Ovary (tissue), 10 donors: ENCODE measurements at regions of chr13 and their contacts with region 1.

Region 1: GRCh38 chr13:27270594-27271520 is at the start of gene RASL11A:
- DNase-seq: peak; percentile 82 to 90 (median 88)
- H3K4me3 ChIP-seq: peak within 1 kb of the TSS; percentile 85
- H3K27ac ChIP-seq: peak within 1 kb of the TSS; percentile 69 to 83
- H3K4me1 ChIP-seq: peaks cover 14% of the 10 kb centered on the region
- H3K27me3 ChIP-seq: no peaks in the 10 kb centered on the region
- CTCF ChIP-seq: peak; percentile 91 to 98 (median 97)
- EP300 ChIP-seq: no peak
- POLR2A ChIP-seq: peak; percentile 74
- total RNA-seq, gene RASL11A: 6.2 to 36.3 (median 10.6) TPM

Region 2: GRCh38 chr13:26971990-26972887 is 298.6 kb before region 1 on chr13:
- intact Hi-C with region 1: loop called in 1 of 4 experiments (anchors 10 kb)
- DNase-seq: no peak
- H3K4me3 ChIP-seq: no peak overlapping the region
- H3K27ac ChIP-seq: no peak overlapping the region
- H3K4me1 ChIP-seq: peaks cover 3% of the 10 kb centered on the region
- H3K27me3 ChIP-seq: no peaks in the 10 kb centered on the region
- CTCF ChIP-seq: no peak
- EP300 ChIP-seq: no peak
- POLR2A ChIP-seq: no peak

Region 3: GRCh38 chr13:26985285-26985878 is 285.5 kb before region 1 on chr13:
- intact Hi-C with region 1: loop called in 2 of 4 experiments (anchors 5 kb)
- DNase-seq: peak; percentile 41 to 82 (median 55)
- H3K4me3 ChIP-seq: no peak overlapping the region
- H3K27ac ChIP-seq: no peak overlapping the region
- H3K4me1 ChIP-seq: peaks cover 9% of the 10 kb centered on the region
- H3K27me3 ChIP-seq: no peaks in the 10 kb centered on the region
- CTCF ChIP-seq: peak; percentile 57 to 85 (median 71)
- EP300 ChIP-seq: no peak
- POLR2A ChIP-seq: no peak

Region 4: DNA sequence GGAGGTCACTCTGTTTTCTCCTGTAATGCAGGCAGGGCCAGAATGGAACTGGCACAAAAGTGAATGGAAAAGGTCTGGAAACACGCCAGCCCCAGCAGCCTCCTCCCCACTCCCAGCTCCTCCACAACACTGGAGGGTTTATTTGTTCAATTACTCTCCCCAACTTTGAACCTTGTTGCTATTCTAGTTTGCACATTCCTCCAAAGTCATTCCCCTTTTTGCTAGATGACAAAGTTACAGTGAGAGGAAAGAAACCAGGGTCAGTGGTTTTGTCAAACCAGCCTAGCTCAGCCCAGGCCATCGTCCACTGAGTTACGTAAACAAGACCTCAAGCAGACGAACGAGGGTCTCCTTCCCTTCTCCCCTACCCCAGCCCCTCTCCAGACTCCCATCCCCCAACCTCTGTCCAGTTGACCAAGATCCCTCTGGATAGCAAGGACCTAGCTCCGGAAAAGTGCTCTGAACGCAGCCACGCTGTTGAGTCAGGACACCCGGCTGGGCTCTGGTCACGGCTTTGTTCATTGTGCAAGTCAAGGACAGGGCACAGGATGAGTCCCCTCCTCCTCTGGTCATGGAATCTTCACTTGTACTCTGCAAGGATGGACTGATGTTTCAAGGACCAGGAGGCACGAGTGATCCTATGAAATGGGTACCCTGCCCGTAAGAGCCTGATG is 279.2 kb before region 1 on chr13:
- intact Hi-C with region 1: loop called in 1 of 4 experiments (anchors 5 kb)
- DNase-seq: no peak
- H3K4me3 ChIP-seq: no peak overlapping the region
- H3K27ac ChIP-seq: no peak overlapping the region
- H3K4me1 ChIP-seq: peaks cover 3% of the 10 kb centered on the region
- H3K27me3 ChIP-seq: no peaks in the 10 kb centered on the region
- CTCF ChIP-seq: no peak
- EP300 ChIP-seq: no peak
- POLR2A ChIP-seq: no peak

Region 5: DNA sequence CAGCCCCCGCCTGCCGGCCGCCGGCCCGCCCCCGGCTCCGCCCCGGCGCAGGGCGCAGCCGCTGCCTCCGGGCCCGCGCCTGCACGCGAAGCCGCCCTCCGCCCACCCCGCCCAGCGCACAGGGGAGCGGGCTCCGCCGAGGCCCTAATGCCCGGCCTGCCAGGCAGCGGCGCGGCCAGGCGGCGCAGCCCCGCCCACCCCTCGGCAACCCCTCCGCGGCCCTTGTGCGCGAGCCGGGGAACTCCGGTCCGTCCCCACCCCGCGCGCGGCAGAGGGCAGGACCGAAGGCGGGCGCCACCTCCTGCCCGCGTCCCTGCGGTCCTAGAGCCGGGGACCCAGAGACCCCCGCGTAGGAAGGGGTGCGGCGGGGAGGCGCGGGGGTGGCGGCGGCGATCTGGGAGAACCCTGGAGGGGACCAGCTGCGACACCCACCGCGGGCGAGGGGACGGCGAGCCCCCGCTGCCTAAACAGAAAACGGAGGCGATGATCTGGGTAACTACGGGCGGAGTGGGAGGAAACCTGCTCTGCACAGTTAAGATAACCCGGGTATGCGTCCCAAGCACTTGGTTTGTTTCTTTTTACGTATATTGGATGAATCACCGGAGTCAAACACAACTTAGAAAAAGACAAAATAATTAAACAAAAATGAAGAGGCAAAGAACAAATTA is 98.9 kb before region 1 on chr13:
- intact Hi-C with region 1: loop called in 2 of 4 experiments (anchors 5 to 10 kb)
- DNase-seq: peak; percentile 85 to 93 (median 90)
- H3K4me3 ChIP-seq: peak overlapping the region; percentile 80
- H3K27ac ChIP-seq: peak overlapping the region; percentile 92 to 94
- H3K4me1 ChIP-seq: peaks cover 9% of the 10 kb centered on the region
- H3K27me3 ChIP-seq: no peaks in the 10 kb centered on the region
- CTCF ChIP-seq: no peak
- EP300 ChIP-seq: no peak
- POLR2A ChIP-seq: no peak

Region 6: GRCh38 chr13:27251166-27252091 is 19.4 kb before region 1 on chr13 and contains the start of gene RPL21:
- intact Hi-C with region 1: loop called in 1 of 4 experiments (anchors 2 kb)
- DNase-seq: peak; percentile 94 to 97 (median 96)
- H3K4me3 ChIP-seq: peak within 1 kb of the TSS; percentile 86
- H3K27ac ChIP-seq: peak within 1 kb of the TSS; percentile 91 to 96
- H3K4me1 ChIP-seq: peaks cover 7% of the 10 kb centered on the region
- H3K27me3 ChIP-seq: no peaks in the 10 kb centered on the region
- CTCF ChIP-seq: no peak
- EP300 ChIP-seq: peak; percentile 85
- POLR2A ChIP-seq: peak; percentile 75
- total RNA-seq, gene RPL21: 1,871 to 3,304 (median 2,161) TPM

Region 7: DNA sequence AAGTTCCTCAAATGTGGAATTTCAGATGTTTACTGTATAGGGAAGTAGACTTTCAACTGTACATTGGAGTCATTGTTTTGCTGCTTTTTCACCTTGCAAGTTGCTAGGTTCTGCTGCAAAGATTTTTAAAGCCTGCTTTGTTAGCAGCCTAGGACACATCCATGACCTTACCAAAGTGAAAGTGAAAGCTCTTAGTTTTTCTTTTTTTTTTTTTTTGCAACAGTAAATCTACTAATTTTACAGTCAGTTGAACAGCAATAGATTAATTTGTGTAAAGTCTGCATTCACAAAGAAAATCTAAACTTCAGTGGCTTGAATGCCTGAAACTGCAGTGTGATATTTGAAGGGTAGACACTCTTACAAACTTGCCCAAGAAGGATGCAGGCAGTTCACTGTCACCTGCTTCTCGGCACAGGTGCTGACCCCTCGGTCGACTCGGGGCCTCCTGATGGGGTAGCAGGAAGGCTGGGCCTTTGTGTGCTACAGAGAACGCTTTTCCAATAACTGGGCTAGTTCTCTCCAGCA is 184.5 kb after region 1 on chr13:
- intact Hi-C with region 1: no loop called
- DNase-seq: no peak
- H3K4me3 ChIP-seq: no peak overlapping the region
- H3K27ac ChIP-seq: no peak overlapping the region
- H3K4me1 ChIP-seq: no peaks in the 10 kb centered on the region
- H3K27me3 ChIP-seq: no peaks in the 10 kb centered on the region
- CTCF ChIP-seq: no peak
- EP300 ChIP-seq: no peak
- POLR2A ChIP-seq: no peak

Region 8: DNA sequence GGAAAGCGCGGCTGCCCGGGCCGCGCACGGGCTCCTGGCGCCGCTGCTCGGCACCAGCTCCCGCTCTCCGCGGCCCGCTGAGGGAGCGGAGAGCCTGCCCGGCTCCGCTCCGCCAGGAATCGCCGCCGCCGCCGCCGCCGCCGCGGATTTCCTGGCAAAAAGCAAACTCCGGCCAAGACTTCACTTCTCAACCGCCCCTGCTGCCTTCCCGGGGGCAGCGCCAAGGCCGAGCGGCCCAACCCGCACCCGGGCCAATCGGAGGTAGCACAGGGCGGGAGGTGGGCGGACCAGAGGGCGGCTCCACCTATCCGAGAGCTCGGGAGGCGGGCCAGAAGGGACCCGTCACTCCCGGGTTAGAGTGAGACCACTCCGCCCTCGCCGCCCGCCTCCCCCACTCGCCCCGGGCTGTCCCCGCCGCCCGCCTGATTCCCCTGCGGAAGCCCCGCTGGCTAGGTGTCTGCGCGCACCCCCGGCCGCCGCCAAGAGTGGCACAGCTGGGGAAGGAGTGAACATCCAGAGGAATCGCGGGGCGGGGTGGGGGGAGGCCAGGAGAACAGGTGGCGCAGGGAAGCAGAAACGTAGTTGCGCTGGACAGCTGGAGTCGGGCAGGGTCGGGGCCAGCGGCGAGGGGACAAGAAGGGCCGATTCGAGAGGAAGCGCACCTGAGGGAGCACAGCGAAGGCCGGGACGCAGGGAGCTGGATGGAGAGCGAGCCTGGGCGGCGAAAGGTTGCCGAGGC is 349.7 kb after region 1 on chr13 and contains the start of gene LNX2:
- intact Hi-C with region 1: loop called in 1 of 4 experiments (anchors 10 kb)
- DNase-seq: peak; percentile 99
- H3K4me3 ChIP-seq: peak within 1 kb of the TSS; percentile 72
- H3K27ac ChIP-seq: peak within 1 kb of the TSS; percentile 94 to 96
- H3K4me1 ChIP-seq: peaks cover 8% of the 10 kb centered on the region
- H3K27me3 ChIP-seq: no peaks in the 10 kb centered on the region
- CTCF ChIP-seq: no peak
- EP300 ChIP-seq: no peak
- POLR2A ChIP-seq: peak; percentile 32
- total RNA-seq, gene LNX2: 6.6 to 9.8 (median 7.8) TPM